Activated CD8-positive, alpha-beta T cell treated with anti-CD3 and anti-CD28 coated beads, Interleukin-2, amount 10 ng/mL, durations not matched to agents 7 days and 5 days (primary cell): ENCODE measurements at regions of chr6 and their contacts with region 1.

Region 1: GRCh38 chr6:41735427-41736356 is at the start of gene TFEB:
- DNase-seq: peak; percentile 95
- ATAC-seq: peak; percentile 69
- H3K4me3 Mint-ChIP-seq: peak within 1 kb of the TSS; percentile 77
- H3K27ac Mint-ChIP-seq: peak within 1 kb of the TSS; percentile 74
- H3K4me1 Mint-ChIP-seq: peaks cover 34% of the 10 kb centered on the region
- H3K27me3 Mint-ChIP-seq: no peaks in the 10 kb centered on the region
- total RNA-seq, gene TFEB: 18.5 to 21.2 TPM

Region 2: DNA sequence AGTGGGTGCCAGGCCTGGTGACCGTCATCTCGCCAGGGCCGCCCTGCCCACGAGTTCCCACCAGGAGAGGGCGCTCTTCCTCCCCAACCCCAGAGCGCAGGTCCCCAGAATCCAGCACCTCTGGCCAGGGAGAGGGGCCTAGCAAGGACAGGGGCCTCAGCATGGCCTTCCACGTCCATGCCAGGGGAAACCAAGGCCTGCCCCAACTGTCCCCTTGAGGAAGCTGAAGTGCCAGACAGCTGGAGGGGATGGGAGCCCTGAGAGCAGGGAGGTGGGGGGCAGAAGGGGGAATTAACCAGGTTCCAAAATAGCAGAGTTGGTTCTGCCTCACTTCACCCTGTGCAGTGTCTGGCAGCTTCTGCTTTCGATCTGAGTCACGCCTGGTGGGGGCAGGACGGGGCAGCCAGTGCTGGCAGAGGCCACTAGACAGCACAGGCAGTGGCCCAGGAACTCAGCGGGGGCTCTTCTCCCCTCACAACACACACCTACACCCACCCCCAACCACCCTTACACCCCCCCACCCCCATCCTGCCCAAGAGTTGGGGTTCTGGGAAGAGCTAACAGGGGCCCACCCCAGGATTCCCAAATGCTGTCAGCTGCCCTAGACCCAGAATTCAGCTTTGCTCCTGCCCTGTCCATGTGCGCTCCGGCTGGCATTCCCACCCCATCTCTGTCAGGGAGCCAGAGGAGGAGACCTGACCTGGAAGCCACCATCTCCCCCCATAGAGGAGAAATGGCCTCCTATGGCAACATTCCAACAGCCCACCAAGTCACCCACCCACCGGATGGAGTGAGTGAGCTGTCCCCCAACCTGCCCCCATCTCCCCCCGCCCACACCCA is 29.5 kb before region 1 on chr6:
- CTCF ChIA-PET with region 1: interaction called, 59 read pairs
- POLR2A ChIA-PET with region 1: interaction called, 19 read pairs
- DNase-seq: peak; percentile 84
- ATAC-seq: peak; percentile 87
- H3K4me3 Mint-ChIP-seq: no peak overlapping the region
- H3K27ac Mint-ChIP-seq: peak overlapping the region; percentile 93
- H3K4me1 Mint-ChIP-seq: peaks cover 41% of the 10 kb centered on the region
- H3K27me3 Mint-ChIP-seq: no peaks in the 10 kb centered on the region

Region 3: DNA sequence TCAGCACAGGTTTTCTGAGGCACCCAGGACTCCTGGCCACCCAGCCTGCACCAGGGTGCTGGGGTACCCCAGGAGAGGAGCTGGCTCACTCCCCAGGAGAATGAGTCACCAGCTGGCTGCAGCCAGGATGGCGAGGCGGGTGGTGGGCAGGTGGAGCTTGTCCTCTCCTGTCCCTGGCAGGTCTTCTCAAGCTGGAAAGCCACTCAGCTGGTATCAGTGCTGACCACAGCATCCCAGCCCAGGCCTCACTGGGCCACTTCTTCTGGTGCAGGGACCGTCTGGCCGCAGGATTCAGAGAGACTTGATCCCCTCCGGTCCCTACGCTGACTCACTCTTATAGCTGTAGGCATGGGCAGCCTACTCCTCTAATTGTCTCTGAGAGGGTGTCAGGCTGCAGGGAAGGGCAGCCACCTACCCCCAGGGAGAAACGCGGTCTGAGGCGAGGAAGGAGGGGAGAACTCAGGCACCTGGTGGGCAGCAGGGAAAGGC is 22.5 kb before region 1 on chr6:
- CTCF ChIA-PET with region 1: interaction called, 25 read pairs
- POLR2A ChIA-PET with region 1: interaction called, 11 read pairs
- DNase-seq: no peak
- ATAC-seq: no peak
- H3K4me3 Mint-ChIP-seq: no peak overlapping the region
- H3K27ac Mint-ChIP-seq: no peak overlapping the region
- H3K4me1 Mint-ChIP-seq: peaks cover 49% of the 10 kb centered on the region
- H3K27me3 Mint-ChIP-seq: no peaks in the 10 kb centered on the region